PC-9 (cell line): ENCODE measurements at regions of chr22 and their contacts with region 1.

Region 1: GRCh38 chr22:26442086-26442756 is 13.2 kb downstream of the ASPHD2 start:
- DNase-seq: no peak
- H3K4me3 ChIP-seq: no peak overlapping the region
- H3K27ac ChIP-seq: no peak overlapping the region
- H3K4me1 ChIP-seq: no peaks in the 10 kb centered on the region
- H3K27me3 ChIP-seq: no peaks in the 10 kb centered on the region; the same call in 1 of the 2 replicates
- CTCF ChIP-seq: no peak

Region 2: DNA sequence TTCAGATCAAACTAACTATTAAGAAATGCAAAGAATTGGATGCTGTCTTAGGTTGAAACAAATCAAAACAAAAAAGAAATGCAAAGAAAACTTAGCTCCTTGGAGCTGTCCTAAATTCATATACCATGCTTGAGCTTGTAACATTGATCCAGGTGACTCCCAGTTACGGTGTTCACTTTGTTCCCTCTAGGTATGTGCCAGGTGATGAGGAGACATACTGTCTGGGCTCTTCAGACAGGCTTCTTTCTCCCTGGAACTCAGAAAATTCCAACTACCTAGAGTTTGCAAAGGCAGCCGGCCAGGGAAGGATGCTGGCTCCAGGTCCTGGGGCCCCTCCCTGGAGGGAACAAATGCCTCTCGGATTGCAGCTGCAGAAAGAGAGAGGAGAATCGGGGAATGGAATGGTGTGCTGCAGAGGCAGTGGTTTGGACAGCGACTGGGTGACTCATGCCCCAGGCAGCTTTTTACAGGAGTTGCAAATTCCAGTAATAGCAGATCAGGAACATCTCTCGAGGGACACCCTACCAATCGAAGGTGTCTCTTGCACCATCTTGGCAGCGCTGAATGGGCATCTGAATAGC is 25.5 kb before region 1 on chr22:
- CTCF ChIA-PET with region 1: no interaction called
- POLR2A ChIA-PET with region 1: interaction called, 32 read pairs
- intact Hi-C with region 1: no loop called
- DNase-seq: peak; percentile 50 to 61
- H3K4me3 ChIP-seq: no peak overlapping the region
- H3K27ac ChIP-seq: no peak overlapping the region
- H3K4me1 ChIP-seq: no peaks in the 10 kb centered on the region
- H3K27me3 ChIP-seq: peaks cover 95% of the 10 kb centered on the region
- CTCF ChIP-seq: no peak

Region 3: DNA sequence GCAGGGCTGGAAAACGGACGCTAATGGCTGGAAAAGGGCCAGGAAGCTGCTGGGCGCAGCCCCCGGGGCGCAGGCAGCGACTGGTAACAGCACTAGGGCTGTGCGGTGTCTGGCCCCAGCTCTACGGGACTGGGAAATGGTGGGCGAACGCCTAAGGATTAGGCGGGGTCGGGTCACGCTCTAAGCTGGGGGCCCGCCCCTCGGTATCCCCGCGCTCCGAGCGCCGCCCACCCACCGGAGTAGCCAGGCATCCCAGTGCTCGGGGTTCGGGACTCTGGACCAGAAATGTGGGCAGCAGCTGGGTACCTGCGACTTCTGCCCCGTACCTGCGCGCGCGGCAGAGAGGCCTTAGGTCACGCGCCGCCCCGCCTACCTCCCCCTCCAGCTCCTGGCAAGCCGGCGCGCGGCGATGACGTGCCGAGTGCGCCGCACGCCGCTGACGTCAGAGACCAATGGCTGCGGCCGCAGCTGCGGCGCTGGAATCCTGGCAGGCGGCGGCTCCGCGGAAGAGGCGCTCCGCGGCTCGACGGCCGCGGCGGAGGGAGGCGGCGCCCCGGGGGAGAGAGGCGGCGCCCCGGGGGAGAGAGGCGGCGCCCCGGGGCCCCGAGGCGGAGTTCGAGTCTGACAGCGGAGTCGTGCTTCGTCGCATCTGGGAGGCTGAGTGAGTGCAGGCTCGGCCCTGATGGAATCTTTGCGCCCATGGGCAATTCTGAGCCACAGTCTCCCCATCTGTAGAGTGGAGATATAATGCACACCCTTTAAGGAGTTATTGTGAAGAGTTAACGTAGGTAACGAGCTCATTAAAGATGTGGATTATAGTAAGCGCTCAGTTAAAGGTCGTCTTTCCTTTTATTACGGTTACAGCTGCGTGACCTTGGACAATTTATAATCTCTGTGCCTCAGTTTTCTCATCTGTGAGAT is 41.5 kb after region 1 on chr22 and contains the starts of genes HPS4 and SRRD:
- CTCF ChIA-PET with region 1: no interaction called
- POLR2A ChIA-PET with region 1: no interaction called
- intact Hi-C with region 1: no loop called
- DNase-seq: peak; percentile 72 to 79
- H3K4me3 ChIP-seq: peak within 1 kb of the TSS; percentile 81
- H3K27ac ChIP-seq: peak within 1 kb of the TSS; percentile 63
- H3K4me1 ChIP-seq: peaks cover 23% of the 10 kb centered on the region
- H3K27me3 ChIP-seq: no peaks in the 10 kb centered on the region
- CTCF ChIP-seq: no peak
- total RNA-seq, gene HPS4: 21.2 and 33.1 TPM in 2 replicates
- total RNA-seq, gene SRRD: 7.1 and 9.5 TPM in 2 replicates